Activated T-helper 2 cell treated with anti-CD3 and anti-CD28 coated beads, Interferon-gamma antibody, Interleukin-2, Interleukin-4, amounts not matched to agents 10 μg/mL and 5 μg/mL and 100 μg/mL, durations not matched to agents 14 hours and 24 hours and 36 hours (primary cell): ENCODE measurements at regions of chr2 and their contacts with region 1.

Region 1: GRCh38 chr2:55431982-55432627 is 12.4 kb upstream of the CCDC88A start:
- DNase-seq: no peak
- H3K4me3 Mint-ChIP-seq: no peak overlapping the region
- H3K27ac Mint-ChIP-seq: no peak overlapping the region
- H3K4me1 Mint-ChIP-seq: peaks cover 5% of the 10 kb centered on the region
- H3K27me3 Mint-ChIP-seq: peaks cover 4% of the 10 kb centered on the region

Region 2: DNA sequence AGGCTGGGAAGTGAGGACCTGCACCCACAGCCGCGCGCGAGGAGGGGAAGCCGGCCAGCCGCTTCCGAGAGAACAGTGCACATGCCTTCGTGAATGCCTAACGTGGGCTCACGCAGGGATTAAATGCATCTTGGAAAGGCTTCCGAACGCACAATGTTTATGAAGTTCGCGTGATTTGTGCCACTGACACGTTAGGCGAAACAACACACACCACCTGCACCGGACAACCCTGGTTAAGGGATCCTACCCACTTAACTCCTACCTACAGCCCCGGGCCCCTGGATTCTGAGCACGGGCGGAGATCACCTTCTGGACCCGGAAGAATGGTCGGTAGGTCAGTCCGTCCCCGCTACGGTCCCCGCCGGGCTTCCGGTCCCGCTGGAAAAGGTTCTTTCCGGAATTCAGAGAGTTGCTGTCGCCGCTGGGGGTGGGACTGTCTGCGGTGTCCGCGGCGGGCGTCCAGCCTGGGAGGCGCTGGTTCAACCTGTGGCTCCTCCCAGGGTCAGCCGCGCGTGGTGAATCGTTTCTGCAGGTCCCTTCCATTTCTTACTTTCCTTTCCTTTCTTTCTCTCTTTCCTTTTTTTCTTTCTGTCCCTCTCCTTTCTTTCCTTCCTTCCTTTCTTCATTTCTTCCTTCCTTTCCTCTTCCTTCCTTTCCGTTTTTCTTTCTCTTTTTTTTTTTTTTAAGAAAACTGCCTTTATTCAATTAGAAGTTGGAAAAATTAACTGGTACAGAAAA is 163.0 kb before region 1 on chr2 and contains the start of gene MTIF2:
- intact Hi-C with region 1: loop called (anchors 1 kb)
- DNase-seq: peak; percentile 82
- H3K4me3 Mint-ChIP-seq: peak within 1 kb of the TSS; percentile 97
- H3K27ac Mint-ChIP-seq: peak within 1 kb of the TSS; percentile 92
- H3K4me1 Mint-ChIP-seq: peaks cover 15% of the 10 kb centered on the region
- H3K27me3 Mint-ChIP-seq: no peaks in the 10 kb centered on the region
- total RNA-seq, gene MTIF2: 40.2 and 42.7 TPM in 2 replicates

Region 3: DNA sequence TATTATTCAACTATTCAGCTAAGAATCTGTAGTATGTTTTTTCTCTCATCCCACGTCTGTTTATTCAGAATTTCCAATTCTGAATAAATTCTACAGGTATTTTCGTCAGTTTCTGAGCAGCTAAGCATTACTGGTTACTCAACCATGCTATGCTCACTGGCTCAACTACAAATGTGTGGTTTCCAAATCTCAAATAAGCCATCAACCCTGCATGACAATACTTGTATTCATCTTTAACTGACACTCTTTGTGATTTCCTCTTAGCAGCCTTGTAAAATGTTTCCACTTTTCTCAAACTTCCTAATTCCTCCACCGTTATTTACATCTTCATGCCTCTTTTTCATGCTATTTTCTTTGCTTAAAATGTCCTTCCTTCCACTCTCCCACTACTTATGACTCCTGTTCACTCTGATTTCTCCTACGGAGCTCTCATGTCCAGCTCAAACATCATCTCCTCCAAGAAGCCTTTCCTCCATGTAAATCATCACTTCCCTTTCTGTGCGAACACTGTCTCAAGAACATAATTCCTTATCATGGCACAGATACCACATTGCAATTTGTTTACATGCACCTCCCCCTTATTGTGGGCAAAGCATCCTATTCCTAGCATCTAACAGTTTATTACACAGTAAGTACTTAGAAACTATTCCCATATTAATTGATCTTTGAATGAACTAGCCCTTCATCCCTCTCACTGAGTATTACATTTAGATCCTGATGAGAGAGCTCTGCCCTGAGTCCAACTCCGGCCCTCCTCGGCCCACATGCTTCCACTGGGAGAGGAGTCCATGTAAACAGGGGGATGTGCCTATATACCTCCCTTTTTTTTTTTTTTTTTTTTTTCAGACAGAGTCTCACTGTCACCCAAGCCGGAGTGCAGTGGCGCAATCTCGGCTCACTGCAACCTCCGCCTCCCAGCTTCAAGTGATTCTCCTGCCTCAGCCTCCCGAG is 22.9 kb before region 1 on chr2:
- intact Hi-C with region 1: loop called (anchors 2 kb)
- DNase-seq: no peak
- H3K4me3 Mint-ChIP-seq: no peak overlapping the region
- H3K27ac Mint-ChIP-seq: no peak overlapping the region
- H3K4me1 Mint-ChIP-seq: peaks cover 7% of the 10 kb centered on the region
- H3K27me3 Mint-ChIP-seq: no peaks in the 10 kb centered on the region